Transverse colon (tissue), 4 donors: ENCODE measurements at regions of chr22 and their contacts with region 1.

Region 1: GRCh38 chr22:45268958-45269844 is 15.5 kb upstream of the UPK3A start:
- DNase-seq: peak; percentile 91
- H3K4me3 ChIP-seq: peak overlapping the region; percentile 32 to 74 (median 42)
- H3K27ac ChIP-seq: peak overlapping the region; percentile 54 to 64 (median 60)
- H3K4me1 ChIP-seq: peaks cover 22 to 52% (median 33%) of the 10 kb centered on the region in 4 donors
- H3K27me3 ChIP-seq: peaks cover 5% of the 10 kb centered on the region
- CTCF ChIP-seq: peak; percentile 85 to 97 (median 92)
- EP300 ChIP-seq: no peak
- POLR2A ChIP-seq: peak; percentile 48

Region 2: DNA sequence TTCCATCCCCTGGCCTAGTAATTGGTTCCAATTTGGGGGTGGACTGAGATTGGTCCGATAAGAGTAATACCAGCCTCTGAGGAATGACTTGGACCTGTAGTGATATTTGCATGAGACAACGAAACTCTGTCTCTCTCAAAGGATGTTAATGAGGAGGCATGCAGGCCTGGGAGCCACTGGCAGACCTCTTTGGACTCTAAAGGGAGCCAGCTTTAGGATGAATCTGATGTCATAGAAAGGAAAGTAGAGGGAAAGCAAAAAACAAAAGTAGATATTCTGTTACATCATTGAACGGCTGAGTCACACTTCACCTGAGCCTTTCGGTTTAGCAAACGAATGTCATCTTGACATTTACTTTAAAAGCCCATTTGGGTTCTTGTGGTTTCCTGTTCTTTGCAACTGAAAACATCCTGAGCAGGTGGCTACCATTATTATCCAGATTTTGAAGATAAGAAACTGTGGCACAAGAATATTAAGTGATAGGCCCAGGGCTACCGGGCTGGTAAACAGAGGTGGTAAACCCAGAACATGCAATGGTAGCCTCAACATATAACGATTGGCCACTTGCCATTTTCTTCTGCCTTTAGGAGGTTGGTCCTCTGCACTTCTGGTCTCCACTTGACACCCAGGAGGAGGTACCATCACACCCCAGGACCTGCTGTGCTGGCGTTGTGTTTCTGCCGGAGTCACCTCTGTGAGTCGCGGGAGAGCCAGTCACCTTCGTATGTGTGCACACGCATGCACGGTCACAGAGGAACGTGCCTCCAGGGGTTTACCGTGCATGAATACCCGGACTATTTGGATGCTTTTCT is 813.8 kb before region 1 on chr22:
- in situ Hi-C with region 1: no loop called
- intact Hi-C with region 1: no loop called
- DNase-seq: peak; percentile 35
- H3K4me3 ChIP-seq: no peak overlapping the region
- H3K27ac ChIP-seq: peak overlapping the region in 2 of 4 donors; percentile 30 to 45
- H3K4me1 ChIP-seq: no peaks in the 10 kb centered on the region
- H3K27me3 ChIP-seq: no peaks in the 10 kb centered on the region
- CTCF ChIP-seq: no peak
- EP300 ChIP-seq: no peak
- POLR2A ChIP-seq: peak; percentile 25

Region 3: DNA sequence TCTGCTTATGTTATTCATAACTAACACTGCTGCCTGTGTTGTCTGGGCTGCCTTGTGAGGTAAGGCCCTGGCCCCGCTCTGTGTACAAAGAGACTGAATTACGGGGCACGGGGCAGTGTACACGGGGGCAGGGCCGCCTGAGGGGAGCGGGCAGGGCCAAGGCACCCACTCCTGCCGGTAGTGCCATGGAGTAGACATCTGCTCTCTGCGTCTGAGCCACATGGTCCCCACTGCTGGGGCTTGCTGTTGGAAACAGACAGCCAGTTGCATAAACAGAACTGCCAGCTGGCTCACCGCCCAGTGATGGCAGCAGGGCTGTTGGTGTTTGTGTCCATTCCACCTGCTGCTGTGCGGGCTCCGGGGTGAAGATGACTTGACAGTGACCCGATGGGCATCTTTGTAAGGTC is 60.3 kb after region 1 on chr22:
- in situ Hi-C with region 1: loop called in 1 of 4 experiments (anchors 10 kb)
- intact Hi-C with region 1: no loop called
- DNase-seq: no peak
- H3K4me3 ChIP-seq: no peak overlapping the region
- H3K27ac ChIP-seq: no peak overlapping the region
- H3K4me1 ChIP-seq: no peaks in the 10 kb centered on the region
- H3K27me3 ChIP-seq: no peaks in the 10 kb centered on the region
- CTCF ChIP-seq: no peak
- EP300 ChIP-seq: no peak
- POLR2A ChIP-seq: no peak

Region 4: DNA sequence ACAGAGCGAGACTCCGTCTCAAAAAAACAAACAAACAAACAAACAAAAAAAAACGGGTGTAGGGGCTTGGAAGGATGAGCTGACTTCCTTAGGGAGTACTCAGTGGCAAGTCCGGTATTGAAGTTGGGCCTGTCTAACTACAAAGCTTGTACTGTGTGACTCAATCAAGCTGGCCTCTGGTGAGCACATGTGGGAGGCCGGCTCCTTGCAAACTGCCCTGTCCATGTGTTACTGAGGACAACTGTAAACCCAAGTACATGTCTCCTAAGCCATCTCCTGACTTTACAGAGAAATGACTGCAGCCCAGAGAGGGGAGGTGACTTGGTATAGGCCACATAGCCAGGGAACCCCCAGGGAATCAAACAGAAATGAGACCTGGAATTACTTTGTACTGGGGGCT is 155.9 kb after region 1 on chr22:
- in situ Hi-C with region 1: loop called in 3 of 4 experiments (anchors 5 to 10 kb)
- intact Hi-C with region 1: no loop called
- DNase-seq: no peak
- H3K4me3 ChIP-seq: no peak overlapping the region
- H3K27ac ChIP-seq: no peak overlapping the region
- H3K4me1 ChIP-seq: no peaks in the 10 kb centered on the region
- H3K27me3 ChIP-seq: no peaks in the 10 kb centered on the region
- CTCF ChIP-seq: no peak
- EP300 ChIP-seq: no peak
- POLR2A ChIP-seq: no peak

Region 5: DNA sequence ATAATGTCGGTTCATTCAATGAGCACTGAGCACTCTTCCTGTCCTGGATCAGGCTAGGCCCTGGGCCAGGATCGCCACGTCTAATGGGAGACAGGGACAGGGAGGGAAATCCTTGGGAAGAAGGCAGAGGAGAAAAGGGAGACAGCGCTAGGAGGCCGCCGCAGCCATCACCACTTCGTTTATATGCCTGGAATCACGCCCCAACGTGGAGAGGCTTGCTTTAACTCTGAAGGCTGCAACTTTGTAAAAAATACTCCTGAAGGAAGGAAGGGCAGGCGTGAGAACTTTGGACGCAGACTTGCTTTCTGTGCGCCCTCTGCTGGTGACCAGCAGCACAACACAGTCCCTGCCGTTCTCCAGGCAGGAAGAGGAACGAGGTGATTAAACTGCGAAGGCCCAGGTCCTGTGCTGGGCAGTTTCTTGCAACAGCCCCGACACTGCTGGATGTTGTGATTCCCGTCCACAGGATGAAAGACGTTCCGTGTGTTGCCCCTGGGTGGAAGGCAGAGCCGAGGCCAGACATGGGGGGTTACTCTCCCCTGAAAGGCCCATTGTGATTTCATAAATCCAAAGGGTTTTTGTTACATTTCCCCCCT is 166.4 kb after region 1 on chr22:
- in situ Hi-C with region 1: loop called in 2 of 4 experiments (anchors 5 to 10 kb)
- intact Hi-C with region 1: loop called (anchors 1 kb)
- DNase-seq: peak; percentile 93
- H3K4me3 ChIP-seq: no peak overlapping the region
- H3K27ac ChIP-seq: peak overlapping the region; percentile 45 to 64 (median 58)
- H3K4me1 ChIP-seq: peaks cover 5 to 10% (median 5%) of the 10 kb centered on the region in 4 donors
- H3K27me3 ChIP-seq: no peaks in the 10 kb centered on the region
- CTCF ChIP-seq: peak; percentile 95 to 99 (median 98)
- EP300 ChIP-seq: no peak
- POLR2A ChIP-seq: no peak

Region 6: DNA sequence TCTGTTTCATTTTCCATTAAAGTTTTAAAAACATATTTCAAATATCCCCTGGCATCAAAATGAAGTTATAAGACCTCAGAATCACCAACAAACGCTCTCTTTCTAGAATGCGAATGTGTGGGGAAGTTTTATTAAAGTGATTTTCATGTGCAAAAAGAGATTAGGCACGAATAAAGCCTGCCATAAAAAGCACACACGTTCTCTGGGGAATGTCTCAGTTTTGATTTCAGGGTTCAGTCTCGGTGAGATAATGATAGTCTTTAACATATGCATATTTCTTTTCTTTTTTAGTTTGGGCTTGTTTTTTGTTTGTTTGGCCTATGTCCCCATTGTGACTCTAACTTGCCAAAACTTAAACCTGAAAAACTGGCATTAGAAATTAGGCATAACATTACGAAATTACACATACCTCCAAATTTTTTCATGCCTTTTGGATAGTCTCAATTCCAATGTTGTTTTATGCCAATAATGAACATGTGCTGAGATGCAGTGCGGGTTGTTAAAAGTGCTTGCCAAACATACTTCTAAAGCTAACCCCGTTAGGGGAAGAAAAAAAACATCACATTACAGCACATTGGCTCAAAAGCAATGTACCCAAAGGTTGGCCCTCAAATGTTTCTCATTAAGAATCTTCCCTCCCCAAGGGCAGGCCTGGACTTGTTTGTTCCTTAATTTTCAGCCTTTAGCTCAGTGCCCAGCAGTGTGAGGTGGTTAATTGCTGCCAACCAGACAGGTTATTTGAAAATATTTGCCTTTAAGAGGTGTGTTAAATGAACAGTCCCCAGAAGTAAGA is 200.3 kb after region 1 on chr22:
- in situ Hi-C with region 1: no loop called
- intact Hi-C with region 1: no loop called
- DNase-seq: no peak
- H3K4me3 ChIP-seq: no peak overlapping the region
- H3K27ac ChIP-seq: no peak overlapping the region
- H3K4me1 ChIP-seq: no peaks in the 10 kb centered on the region
- H3K27me3 ChIP-seq: no peaks in the 10 kb centered on the region
- CTCF ChIP-seq: no peak
- EP300 ChIP-seq: no peak
- POLR2A ChIP-seq: no peak

Region 7: DNA sequence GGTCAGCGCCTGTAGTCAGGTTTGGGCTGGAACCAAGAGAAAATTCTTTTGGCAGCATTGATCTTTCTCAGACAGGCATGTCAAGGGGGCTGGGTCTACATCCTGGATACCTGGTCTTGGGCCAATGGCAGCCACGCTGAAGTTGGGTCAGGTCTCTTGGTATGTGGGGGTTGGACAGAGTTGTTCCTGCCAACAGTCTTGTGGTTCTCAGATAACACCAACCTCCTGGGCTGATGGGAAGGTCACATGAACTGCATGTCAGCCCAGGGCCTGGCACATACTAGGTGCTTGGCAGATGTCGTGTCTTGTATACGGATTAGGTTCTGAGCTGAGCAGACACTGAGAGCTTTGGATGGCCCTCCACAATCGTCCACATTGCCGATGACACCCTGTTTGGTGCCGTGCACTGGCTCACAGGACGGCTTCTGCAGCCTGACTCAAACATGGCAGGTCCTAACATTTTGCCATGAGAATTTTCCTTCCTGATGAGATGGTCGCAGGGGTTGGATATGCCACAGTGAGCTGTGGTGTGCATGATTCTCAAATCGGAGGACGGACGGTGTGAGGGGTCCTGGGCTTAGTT is 275.5 kb after region 1 on chr22:
- in situ Hi-C with region 1: loop called in 1 of 4 experiments (anchors 25 kb)
- intact Hi-C with region 1: loop called (anchors 2 kb)
- DNase-seq: no peak
- H3K4me3 ChIP-seq: no peak overlapping the region
- H3K27ac ChIP-seq: no peak overlapping the region
- H3K4me1 ChIP-seq: peaks cover 5 to 7% (median 6%) of the 10 kb centered on the region in 4 donors
- H3K27me3 ChIP-seq: no peaks in the 10 kb centered on the region
- CTCF ChIP-seq: no peak
- EP300 ChIP-seq: no peak
- POLR2A ChIP-seq: no peak

Region 8: DNA sequence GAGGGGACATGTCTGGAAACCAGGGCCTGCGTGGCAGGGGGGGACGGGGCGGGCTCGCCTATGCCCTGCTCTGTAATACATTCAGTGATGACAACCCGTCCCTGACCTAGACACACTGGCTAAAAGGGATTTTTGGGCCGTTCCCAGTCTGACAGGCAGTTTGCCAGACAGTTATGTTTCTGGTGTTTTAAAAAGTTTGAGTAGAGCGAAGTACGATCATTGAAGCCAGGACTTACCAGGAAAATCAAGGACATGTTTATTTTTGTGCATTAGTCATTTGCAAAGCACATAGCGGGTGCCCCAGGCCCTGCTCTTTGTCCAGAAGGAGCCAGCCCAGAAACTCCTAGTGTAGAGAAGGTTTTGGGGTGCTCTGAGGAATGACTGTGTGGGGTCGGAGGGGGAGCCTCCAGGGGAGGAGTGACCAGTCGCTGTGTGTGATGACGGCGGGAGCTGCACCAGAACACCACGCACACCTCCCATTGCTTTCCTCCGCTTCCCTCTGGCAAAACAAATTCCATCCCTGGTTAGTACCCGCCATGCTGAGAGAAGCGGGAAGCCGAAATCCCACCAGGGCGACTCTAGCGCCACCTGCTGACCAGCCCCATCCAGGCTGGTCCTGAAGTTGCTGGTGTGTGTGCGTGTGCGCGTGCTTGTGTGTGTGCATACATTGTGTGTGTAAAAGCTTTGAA is 284.3 kb after region 1 on chr22:
- in situ Hi-C with region 1: loop called in 3 of 4 experiments (anchors 5 to 25 kb)
- intact Hi-C with region 1: no loop called
- DNase-seq: peak; percentile 73
- H3K4me3 ChIP-seq: no peak overlapping the region
- H3K27ac ChIP-seq: peak overlapping the region; percentile 72 to 88 (median 76)
- H3K4me1 ChIP-seq: peaks cover 15 to 41% (median 23%) of the 10 kb centered on the region in 4 donors
- H3K27me3 ChIP-seq: no peaks in the 10 kb centered on the region
- CTCF ChIP-seq: peak; percentile 81 to 88 (median 82)
- EP300 ChIP-seq: peak; percentile 37
- POLR2A ChIP-seq: no peak

Region 9: GRCh38 chr22:45629469-45630089 is 360.4 kb after region 1 on chr22:
- in situ Hi-C with region 1: no loop called
- intact Hi-C with region 1: no loop called
- DNase-seq: no peak
- H3K4me3 ChIP-seq: no peak overlapping the region
- H3K27ac ChIP-seq: no peak overlapping the region
- H3K4me1 ChIP-seq: peaks cover 0 to 4% (median 0%) of the 10 kb centered on the region in 4 donors
- H3K27me3 ChIP-seq: peaks cover 42% of the 10 kb centered on the region
- CTCF ChIP-seq: no peak
- EP300 ChIP-seq: no peak
- POLR2A ChIP-seq: no peak

Region 10: GRCh38 chr22:45911601-45912271 is 642.5 kb after region 1 on chr22:
- in situ Hi-C with region 1: no loop called
- intact Hi-C with region 1: no loop called
- DNase-seq: no peak
- H3K4me3 ChIP-seq: no peak overlapping the region
- H3K27ac ChIP-seq: no peak overlapping the region
- H3K4me1 ChIP-seq: no peaks in the 10 kb centered on the region
- H3K27me3 ChIP-seq: peaks cover 2% of the 10 kb centered on the region
- CTCF ChIP-seq: no peak
- EP300 ChIP-seq: no peak
- POLR2A ChIP-seq: no peak